ENCODE measurements at regions of chr3 and their contacts with region 1.

Region 1: GRCh38 chr3:40524568-40525285 is at the start of gene ZNF621:
- DNase-seq: peak; percentile 88
- ATAC-seq: peak; percentile 99
- H3K4me3 Mint-ChIP-seq: peak within 1 kb of the TSS; percentile 90
- H3K27ac Mint-ChIP-seq: peak within 1 kb of the TSS; percentile 91
- H3K4me1 Mint-ChIP-seq: peaks cover 23% of the 10 kb centered on the region
- H3K27me3 Mint-ChIP-seq: no peaks in the 10 kb centered on the region
- CTCF ChIP-seq: no peak
- total RNA-seq, gene ZNF621: 18.5 to 19.1 TPM

Region 2: DNA sequence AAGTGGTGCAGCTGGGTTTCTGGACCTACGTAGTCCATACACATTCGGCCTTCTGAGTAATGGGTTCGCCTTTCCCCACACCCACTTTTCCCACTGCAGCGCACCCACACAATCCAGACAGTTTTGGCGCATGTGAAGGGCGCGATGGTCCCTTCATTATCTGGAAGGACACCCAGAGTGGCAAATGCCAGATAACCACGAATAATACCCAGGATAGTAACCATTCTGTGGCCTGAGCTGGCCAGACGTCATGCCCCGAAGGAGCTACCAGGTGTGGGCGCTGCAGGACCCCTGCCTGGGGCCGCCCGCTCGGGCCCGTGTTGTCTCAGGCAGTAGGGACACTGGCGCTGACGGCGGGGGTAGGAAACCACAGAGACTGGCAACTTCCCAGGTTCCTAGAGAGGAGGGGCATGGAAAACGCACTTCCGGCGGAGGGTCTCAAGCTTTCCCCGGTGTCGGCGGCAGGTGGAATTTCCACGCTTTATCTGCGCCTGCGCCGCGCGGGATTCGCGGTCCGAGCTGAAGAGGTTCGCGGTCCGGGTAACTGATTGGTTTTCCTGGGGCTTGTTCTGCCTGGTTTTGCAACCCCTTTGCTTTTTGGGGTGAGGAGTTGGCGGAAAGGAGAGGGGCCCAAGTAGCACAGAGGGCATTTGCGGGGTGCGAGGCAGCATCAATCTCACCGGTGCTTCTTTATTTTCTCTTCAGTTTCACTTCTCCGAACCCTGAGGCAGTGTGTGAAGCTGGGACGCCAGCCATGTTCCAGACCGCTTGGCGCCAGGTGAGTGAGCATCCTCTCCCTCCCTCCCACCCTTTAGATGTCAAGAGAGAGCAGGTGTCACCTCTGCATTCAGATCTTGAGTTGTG is 18.9 kb before region 1 on chr3 and contains the start of gene ZNF620:
- CTCF ChIA-PET with region 1: interaction called, 6 read pairs
- POLR2A ChIA-PET with region 1: interaction called, 11 read pairs
- intact Hi-C with region 1: no loop called
- DNase-seq: peak; percentile 53
- ATAC-seq: peak; percentile 79
- H3K4me3 Mint-ChIP-seq: peak within 1 kb of the TSS; percentile 91
- H3K27ac Mint-ChIP-seq: peak within 1 kb of the TSS; percentile 90
- H3K4me1 Mint-ChIP-seq: peaks cover 17% of the 10 kb centered on the region
- H3K27me3 Mint-ChIP-seq: no peaks in the 10 kb centered on the region
- CTCF ChIP-seq: no peak
- total RNA-seq, gene ZNF620: 2.5 to 3.6 TPM

Region 3: GRCh38 chr3:40546816-40547215 is 22.1 kb after region 1 on chr3:
- CTCF ChIA-PET with region 1: no interaction called
- POLR2A ChIA-PET with region 1: no interaction called
- intact Hi-C with region 1: no loop called
- DNase-seq: no peak
- ATAC-seq: no peak
- H3K4me3 Mint-ChIP-seq: no peak overlapping the region
- H3K27ac Mint-ChIP-seq: no peak overlapping the region
- H3K4me1 Mint-ChIP-seq: no peaks in the 10 kb centered on the region
- H3K27me3 Mint-ChIP-seq: no peaks in the 10 kb centered on the region
- CTCF ChIP-seq: no peak

Region 4: GRCh38 chr3:40642812-40643211 is 118.1 kb after region 1 on chr3:
- CTCF ChIA-PET with region 1: no interaction called
- POLR2A ChIA-PET with region 1: no interaction called
- intact Hi-C with region 1: no loop called
- DNase-seq: no peak
- ATAC-seq: no peak
- H3K4me3 Mint-ChIP-seq: no peak overlapping the region
- H3K27ac Mint-ChIP-seq: no peak overlapping the region
- H3K4me1 Mint-ChIP-seq: no peaks in the 10 kb centered on the region
- H3K27me3 Mint-ChIP-seq: peaks cover 7% of the 10 kb centered on the region
- CTCF ChIP-seq: no peak

Region 5: GRCh38 chr3:40731445-40731844 is 206.7 kb after region 1 on chr3:
- CTCF ChIA-PET with region 1: no interaction called
- POLR2A ChIA-PET with region 1: no interaction called
- intact Hi-C with region 1: no loop called
- DNase-seq: no peak
- ATAC-seq: no peak
- H3K4me3 Mint-ChIP-seq: no peak overlapping the region
- H3K27ac Mint-ChIP-seq: no peak overlapping the region
- H3K4me1 Mint-ChIP-seq: no peaks in the 10 kb centered on the region
- H3K27me3 Mint-ChIP-seq: peaks cover 4% of the 10 kb centered on the region
- CTCF ChIP-seq: no peak

Region 6: GRCh38 chr3:40847551-40847992 is 322.8 kb after region 1 on chr3:
- CTCF ChIA-PET with region 1: no interaction called
- POLR2A ChIA-PET with region 1: no interaction called
- intact Hi-C with region 1: no loop called
- DNase-seq: no peak
- ATAC-seq: no peak
- H3K4me3 Mint-ChIP-seq: no peak overlapping the region
- H3K27ac Mint-ChIP-seq: no peak overlapping the region
- H3K4me1 Mint-ChIP-seq: no peaks in the 10 kb centered on the region
- H3K27me3 Mint-ChIP-seq: no peaks in the 10 kb centered on the region
- CTCF ChIP-seq: no peak

Measured in activated CD8-positive, alpha-beta T cell treated with anti-CD3 and anti-CD28 coated beads for 36 hours (primary cell).